ENCODE measurements at regions of chr20 and their contacts with region 1.

Region 1: DNA sequence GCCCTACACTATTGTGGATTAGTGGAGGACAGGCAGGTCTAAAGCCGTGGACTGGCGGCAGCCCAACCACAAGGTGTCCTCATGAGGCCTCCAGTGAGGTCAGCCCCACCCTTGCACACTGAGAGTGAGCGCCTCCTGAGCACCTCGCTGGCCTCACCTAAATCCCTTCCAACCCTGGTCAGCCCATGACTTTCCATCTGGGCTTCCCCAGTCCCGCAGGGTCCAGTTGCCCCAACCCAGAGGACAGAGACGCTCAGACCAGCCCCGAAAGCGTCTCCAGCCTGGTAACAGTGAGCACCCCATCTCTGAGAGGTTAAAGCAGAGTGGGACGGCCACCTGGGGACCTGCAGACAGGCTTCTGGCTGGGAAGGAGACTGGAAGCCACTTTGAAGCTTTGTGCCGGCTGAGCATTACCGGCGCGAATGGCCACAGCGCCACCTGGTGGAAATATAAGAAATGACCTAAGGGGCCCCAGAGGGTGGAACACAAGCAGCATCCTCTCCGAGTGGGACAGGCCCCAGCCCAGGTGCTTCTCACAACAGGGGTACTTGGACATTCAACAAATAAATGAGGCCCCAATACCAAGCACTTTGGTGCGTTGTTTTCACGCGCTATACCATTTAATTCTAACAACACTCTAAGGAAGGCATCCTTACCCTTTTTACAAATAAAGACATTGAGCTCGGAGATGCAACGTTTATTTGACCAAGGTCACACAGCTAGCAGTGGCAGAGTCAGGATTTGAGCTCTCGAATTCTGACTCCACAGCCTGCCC is 65.7 kb upstream of the TOP1 start:
- DNase-seq: peak; percentile 81

Region 2: DNA sequence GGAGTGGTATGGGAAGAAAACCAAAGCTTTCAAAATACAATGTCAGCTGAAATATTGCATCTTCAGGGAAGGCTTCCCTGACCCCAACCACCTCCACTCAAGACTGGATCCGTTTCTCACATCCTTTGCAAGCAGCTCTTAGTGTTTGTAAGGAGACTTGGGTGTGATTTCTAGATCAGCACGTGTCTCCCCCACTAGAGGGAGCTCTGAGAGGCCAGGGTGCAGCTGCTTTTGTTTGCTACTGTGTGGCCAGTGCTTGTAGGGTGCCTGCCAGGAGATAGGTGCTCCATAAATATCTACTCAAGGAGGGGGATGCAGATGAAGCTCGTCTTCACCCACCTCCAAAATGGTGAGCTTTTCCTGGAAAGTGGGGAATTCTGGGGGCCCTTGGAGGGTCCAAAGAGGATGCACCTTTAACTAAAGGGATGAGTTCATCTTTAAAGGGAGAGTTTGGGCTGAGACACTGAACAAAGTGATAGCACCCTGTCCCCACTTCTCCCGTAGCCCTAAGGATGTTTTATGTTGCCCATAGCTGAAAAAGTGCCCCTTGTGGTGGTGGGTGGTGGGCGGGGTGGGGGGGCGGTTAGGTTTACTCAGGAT is 221.3 kb before region 1 on chr20:
- CTCF ChIA-PET with region 1: interaction called, 10 read pairs
- POLR2A ChIA-PET with region 1: no interaction called
- DNase-seq: peak; percentile 67

Region 3: DNA sequence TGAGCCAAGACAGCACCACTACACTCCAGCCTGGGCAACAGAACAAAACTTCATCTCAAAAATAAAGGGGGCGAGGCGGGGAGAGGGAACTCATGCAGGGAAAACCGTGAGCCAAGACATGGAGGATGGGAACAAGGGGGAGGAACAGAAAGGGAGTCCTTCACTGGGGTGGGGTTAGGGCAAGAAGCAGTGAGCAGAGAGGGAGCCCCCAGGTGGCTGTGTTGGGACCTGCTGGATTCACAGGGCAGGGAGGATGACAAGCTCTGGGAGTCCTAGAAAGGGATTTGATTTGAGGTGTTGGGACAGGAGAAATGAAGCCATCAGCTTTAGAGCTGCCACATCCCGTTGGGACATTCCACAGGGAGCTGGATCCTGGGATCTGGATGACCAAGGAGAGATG is 24.9 kb before region 1 on chr20:
- CTCF ChIA-PET with region 1: no interaction called
- POLR2A ChIA-PET with region 1: no interaction called
- DNase-seq: peak; percentile 53

Region 4: GRCh38 chr20:41095110-41095969 is 132.4 kb after region 1 on chr20:
- CTCF ChIA-PET with region 1: interaction called, 15 read pairs
- POLR2A ChIA-PET with region 1: no interaction called
- DNase-seq: peak; percentile 60

Measured in HEK293T (cell line).